ENCODE measurements at regions of chr6 and their contacts with region 1.

Region 1: GRCh38 chr6:33860706-33861474 is 57.1 kb upstream of the MLN start:
- DNase-seq: peak; percentile 88
- ATAC-seq: peak; percentile 71
- H3K4me3 Mint-ChIP-seq: peak overlapping the region; percentile 19
- H3K27ac Mint-ChIP-seq: peak overlapping the region; percentile 82
- H3K4me1 Mint-ChIP-seq: peaks cover 83% of the 10 kb centered on the region
- H3K27me3 Mint-ChIP-seq: peaks cover 4% of the 10 kb centered on the region

Region 2: GRCh38 chr6:33904050-33904746 is 43.3 kb after region 1 on chr6:
- CTCF ChIA-PET with region 1: interaction called, 32 read pairs
- DNase-seq: peak; percentile 99
- ATAC-seq: peak; percentile 89
- H3K4me3 Mint-ChIP-seq: peak overlapping the region; percentile 82
- H3K27ac Mint-ChIP-seq: peak overlapping the region; percentile 95
- H3K4me1 Mint-ChIP-seq: peaks cover 79% of the 10 kb centered on the region
- H3K27me3 Mint-ChIP-seq: no peaks in the 10 kb centered on the region

Region 3: GRCh38 chr6:33914645-33915044 is 53.8 kb after region 1 on chr6:
- CTCF ChIA-PET with region 1: interaction called, 15 read pairs
- DNase-seq: peak; percentile 78
- ATAC-seq: peak; percentile 79
- H3K4me3 Mint-ChIP-seq: peak overlapping the region; percentile 6
- H3K27ac Mint-ChIP-seq: peak overlapping the region; percentile 86
- H3K4me1 Mint-ChIP-seq: peaks cover 39% of the 10 kb centered on the region
- H3K27me3 Mint-ChIP-seq: no peaks in the 10 kb centered on the region

Region 4: GRCh38 chr6:34055223-34055933 is 194.5 kb after region 1 on chr6:
- CTCF ChIA-PET with region 1: no interaction called
- DNase-seq: peak; percentile 74
- ATAC-seq: peak; percentile 80
- H3K4me3 Mint-ChIP-seq: no peak overlapping the region
- H3K27ac Mint-ChIP-seq: no peak overlapping the region
- H3K4me1 Mint-ChIP-seq: no peaks in the 10 kb centered on the region
- H3K27me3 Mint-ChIP-seq: peaks cover 8% of the 10 kb centered on the region